AG04449 (cell line): ENCODE measurements at regions of chr22 and their contacts with region 1.

Region 1: DNA sequence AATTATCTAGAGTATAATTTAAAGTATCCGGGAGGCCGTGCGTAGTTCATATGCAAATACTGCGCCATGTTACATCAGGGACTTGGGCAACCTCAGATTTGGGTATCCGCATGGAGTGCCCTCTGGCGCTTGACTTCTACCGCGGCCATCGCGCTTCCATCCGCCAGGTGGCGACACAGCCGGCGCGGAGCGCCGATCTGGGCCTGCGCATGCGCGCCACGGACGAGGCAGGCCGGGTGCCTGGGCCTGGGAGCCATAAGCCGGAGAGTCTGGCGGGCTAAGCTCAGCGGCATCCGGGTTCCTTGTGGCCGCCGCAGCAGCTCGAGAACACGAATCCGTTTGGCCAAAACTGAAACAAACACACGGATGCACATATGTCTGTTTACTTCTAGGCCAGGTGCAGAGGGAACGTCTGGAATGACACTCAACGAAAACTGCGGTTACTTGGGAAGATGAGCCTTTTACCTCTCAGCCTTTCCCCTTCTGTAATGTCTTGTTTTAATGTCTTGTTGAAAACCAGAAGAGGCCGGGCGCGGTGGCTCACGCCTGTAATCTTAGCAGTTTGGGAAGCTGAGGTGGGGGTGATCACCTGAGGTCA is 21.9 kb downstream of the SNU13 start:
- DNase-seq: no peak
- H3K4me3 ChIP-seq: peak overlapping the region; percentile 53
- CTCF ChIP-seq: peak; percentile 100

Region 2: GRCh38 chr22:41479671-41480396 is 186.9 kb before region 1 on chr22:
- CTCF ChIA-PET with region 1: no interaction called
- POLR2A ChIA-PET with region 1: no interaction called
- DNase-seq: no peak
- H3K4me3 ChIP-seq: no peak overlapping the region
- CTCF ChIP-seq: peak; percentile 4

Region 3: GRCh38 chr22:41532908-41533825 is 133.6 kb before region 1 on chr22:
- CTCF ChIA-PET with region 1: no interaction called
- POLR2A ChIA-PET with region 1: no interaction called
- DNase-seq: no peak
- H3K4me3 ChIP-seq: no peak overlapping the region
- CTCF ChIP-seq: peak; percentile 85

Region 4: DNA sequence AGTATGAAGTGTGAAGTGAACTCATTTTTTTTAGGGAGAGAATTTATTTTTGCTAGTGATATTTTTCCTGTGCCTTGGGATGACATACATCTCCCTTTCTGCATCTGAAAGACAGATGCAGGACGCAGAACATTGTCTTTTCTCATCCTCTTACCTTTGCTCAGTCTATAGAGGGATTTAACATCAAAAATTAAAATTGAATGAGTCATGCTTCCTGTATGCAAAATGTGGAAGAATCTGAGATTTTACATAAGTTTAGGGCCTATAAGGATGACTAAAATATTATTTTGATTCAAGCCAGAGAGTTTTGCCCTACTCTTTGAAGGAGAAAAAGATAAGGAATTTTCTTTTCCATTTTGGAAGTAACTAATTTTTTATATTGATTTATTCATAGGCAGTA is 18.3 kb before region 1 on chr22:
- CTCF ChIA-PET with region 1: interaction called, 123 read pairs
- POLR2A ChIA-PET with region 1: no interaction called
- DNase-seq: no peak
- H3K4me3 ChIP-seq: no peak overlapping the region
- CTCF ChIP-seq: no peak

Region 5: DNA sequence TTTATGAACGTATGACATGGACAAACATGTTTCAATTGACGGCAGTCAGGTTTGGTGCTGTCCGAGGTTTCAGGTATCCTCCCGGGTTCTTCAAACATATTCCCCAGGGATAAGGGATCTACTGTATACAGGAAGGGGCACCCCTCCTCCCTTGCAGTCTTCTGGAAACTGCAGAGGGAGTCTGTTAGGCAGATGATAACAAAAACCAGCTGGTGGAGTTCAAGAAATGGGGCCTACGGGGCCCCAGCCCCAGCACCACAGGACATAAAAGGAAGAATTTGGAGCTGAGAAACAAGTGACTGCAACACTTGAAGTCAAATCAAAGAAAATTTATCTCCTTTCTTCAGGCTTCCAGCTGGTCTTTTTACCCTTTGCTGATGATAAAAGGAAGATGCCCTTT is 10.2 kb before region 1 on chr22:
- CTCF ChIA-PET with region 1: interaction called, 123 read pairs
- POLR2A ChIA-PET with region 1: no interaction called
- DNase-seq: no peak
- H3K4me3 ChIP-seq: no peak overlapping the region
- CTCF ChIP-seq: no peak

Region 6: DNA sequence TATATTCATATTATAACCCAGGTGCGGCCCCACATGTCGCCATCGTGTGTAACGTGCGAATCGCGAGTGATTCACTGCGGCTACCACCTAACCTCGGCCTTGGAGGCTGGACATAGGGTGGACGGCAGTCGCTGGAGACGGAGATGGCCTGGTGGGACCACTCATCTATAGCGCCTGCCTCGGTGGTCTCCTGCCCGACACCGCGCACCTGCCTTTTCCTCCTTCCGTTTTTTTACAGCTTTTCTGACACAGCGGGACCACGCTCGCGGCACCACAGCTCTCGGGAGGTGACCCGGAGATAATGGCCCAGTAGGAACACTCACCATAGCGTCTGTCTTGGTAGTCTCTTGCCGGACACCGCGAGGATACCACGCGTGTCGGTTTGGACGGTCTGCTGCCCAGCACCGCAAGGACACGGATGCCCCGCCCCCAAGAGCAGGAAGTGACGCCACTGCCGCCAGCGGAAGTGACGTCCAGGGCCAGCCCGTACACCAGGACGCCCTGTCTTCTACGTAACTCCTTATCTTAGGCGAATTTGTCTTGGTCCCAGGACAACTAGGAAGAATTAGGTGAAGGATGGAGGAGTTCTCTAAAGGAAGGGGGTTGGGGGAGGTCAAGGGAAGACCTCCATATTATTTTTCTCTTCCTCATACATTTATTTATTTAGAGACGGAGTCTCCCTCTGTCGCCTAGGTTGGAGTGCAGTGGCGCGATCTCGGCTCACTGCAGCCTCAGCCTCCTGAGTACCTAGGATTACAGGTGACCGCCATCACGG is 15.5 kb after region 1 on chr22:
- CTCF ChIA-PET with region 1: interaction called, 22 read pairs
- POLR2A ChIA-PET with region 1: no interaction called
- DNase-seq: peak; percentile 34
- H3K4me3 ChIP-seq: peak overlapping the region; percentile 79
- CTCF ChIP-seq: no peak

Region 7: DNA sequence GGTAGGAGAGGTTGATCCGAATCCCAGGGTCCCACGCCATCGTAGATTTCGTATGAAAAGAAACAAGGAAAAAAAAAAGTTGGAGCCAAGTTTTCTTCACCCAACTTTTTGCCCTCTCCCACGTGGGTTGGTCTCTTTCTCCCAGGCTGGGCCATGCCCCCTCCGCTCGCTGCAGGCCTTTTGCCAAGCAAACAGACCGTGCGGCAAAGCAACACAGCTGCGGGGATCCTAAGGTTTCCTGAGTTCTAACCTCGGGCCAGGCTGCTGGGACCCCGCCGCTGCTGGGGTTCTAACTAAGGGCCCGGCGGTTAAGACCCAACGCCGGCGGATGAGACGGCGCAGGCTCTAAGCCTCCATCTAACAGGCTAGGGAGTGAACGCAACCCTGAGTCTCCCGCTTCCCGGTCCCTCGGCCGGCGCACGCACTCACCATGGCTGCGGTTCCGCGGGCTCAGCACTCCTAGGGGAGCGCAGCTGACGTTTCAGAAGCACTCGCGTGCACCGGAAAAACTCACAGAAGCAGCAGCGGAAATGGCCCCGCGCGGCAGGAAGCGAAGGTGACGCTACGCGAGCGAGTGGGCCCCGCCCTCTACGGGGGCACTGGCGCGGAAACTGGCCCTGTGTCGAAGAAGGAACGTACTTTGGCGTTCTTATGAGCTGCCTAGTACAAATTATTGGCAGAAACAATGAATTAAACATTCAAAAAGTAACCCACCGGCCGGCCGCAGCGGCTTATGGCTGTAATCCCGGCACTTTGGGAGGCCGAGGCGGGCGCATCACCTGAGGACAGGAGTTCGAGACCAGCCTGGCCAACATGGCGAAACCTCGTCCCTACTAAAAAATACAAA is 21.8 kb after region 1 on chr22 and contains the start of gene SNU13:
- CTCF ChIA-PET with region 1: interaction called, 12 read pairs
- POLR2A ChIA-PET with region 1: interaction called, 5 read pairs
- DNase-seq: peak; percentile 33
- H3K4me3 ChIP-seq: peak within 1 kb of the TSS; percentile 86
- CTCF ChIP-seq: no peak

Region 8: GRCh38 chr22:41940832-41941765 is 274.3 kb after region 1 on chr22:
- CTCF ChIA-PET with region 1: interaction called, 50 read pairs
- POLR2A ChIA-PET with region 1: no interaction called
- DNase-seq: peak; percentile 52
- H3K4me3 ChIP-seq: no peak overlapping the region
- CTCF ChIP-seq: peak; percentile 93